A673 (cell line): ENCODE measurements at regions of chr2 and their contacts with region 1.

Region 1: GRCh38 chr2:213274143-213274542 is 10.1 kb upstream of the SPAG16 start:
- DNase-seq: no peak
- H3K4me3 ChIP-seq: no peak overlapping the region
- H3K27ac ChIP-seq: no peak overlapping the region
- H3K4me1 ChIP-seq: no peaks in the 10 kb centered on the region
- H3K27me3 ChIP-seq: no peaks in the 10 kb centered on the region
- CTCF ChIP-seq: no peak

Region 2: GRCh38 chr2:213261771-213262170 is 12.4 kb before region 1 on chr2:
- CTCF ChIA-PET with region 1: interaction called, 10 read pairs
- POLR2A ChIA-PET with region 1: no interaction called
- intact Hi-C with region 1: no loop called
- DNase-seq: no peak
- H3K4me3 ChIP-seq: no peak overlapping the region
- H3K27ac ChIP-seq: no peak overlapping the region
- H3K4me1 ChIP-seq: no peaks in the 10 kb centered on the region
- H3K27me3 ChIP-seq: no peaks in the 10 kb centered on the region
- CTCF ChIP-seq: no peak

Region 3: DNA sequence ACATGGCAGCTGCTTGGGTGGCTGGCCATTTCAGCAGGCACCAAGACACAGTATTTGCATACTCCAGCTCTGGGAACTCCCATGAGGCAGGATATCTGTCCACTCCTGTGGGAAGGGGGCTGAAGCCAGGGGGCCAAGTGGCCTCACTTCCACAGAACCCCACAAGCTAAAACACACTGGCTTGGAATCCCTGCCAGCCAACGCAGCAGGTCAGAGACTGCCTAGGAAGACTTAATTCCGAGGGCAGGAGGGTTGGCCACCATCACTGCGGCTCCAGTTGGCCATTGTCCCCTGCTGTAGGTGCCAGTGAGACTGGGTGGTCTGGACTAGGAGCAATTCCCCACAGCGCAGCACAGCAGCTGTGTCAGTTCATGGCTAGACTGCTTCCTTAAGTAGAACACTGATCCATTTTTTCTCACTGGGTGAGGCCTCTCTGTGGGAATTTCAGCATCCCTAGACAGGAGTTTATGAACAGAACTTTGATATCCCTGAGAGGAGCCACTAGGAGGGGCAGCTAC is 62.2 kb after region 1 on chr2:
- CTCF ChIA-PET with region 1: no interaction called
- POLR2A ChIA-PET with region 1: no interaction called
- intact Hi-C with region 1: no loop called
- DNase-seq: no peak
- H3K4me3 ChIP-seq: no peak overlapping the region
- H3K27ac ChIP-seq: no peak overlapping the region
- H3K4me1 ChIP-seq: no peaks in the 10 kb centered on the region
- H3K27me3 ChIP-seq: no peaks in the 10 kb centered on the region
- CTCF ChIP-seq: no peak

Region 4: DNA sequence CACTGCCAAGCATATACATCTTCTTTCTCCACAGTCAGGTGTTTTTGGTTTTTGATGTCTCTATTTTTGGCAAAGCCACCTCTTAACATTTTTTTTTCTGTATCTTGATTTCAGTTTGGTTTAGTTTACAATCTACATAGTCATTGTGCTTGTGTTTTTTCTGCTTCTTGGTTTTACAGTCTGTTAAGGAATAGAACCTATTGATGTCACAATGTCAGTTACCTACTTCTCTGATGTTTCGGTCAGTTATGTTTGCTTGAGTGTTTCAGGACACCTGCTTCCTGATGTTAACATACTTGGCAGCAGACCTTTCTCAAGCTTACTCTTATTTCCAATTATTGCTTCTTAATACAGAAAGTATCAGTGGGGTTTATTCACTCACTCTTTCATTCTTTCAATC is 263.4 kb after region 1 on chr2:
- CTCF ChIA-PET with region 1: no interaction called
- POLR2A ChIA-PET with region 1: no interaction called
- intact Hi-C with region 1: no loop called
- DNase-seq: no peak
- H3K4me3 ChIP-seq: no peak overlapping the region
- H3K27ac ChIP-seq: no peak overlapping the region
- H3K4me1 ChIP-seq: no peaks in the 10 kb centered on the region
- H3K27me3 ChIP-seq: no peaks in the 10 kb centered on the region
- CTCF ChIP-seq: no peak